GM12878 (cell line): ENCODE measurements at regions of chr1 and their contacts with region 1.

Region 1: GRCh38 chr1:117059678-117060440 is at the start of gene TTF2:
- DNase-seq: peak; percentile 99
- ATAC-seq: peak; percentile 86
- H3K4me3 ChIP-seq: peak within 1 kb of the TSS; percentile 84
- H3K27ac ChIP-seq: peak within 1 kb of the TSS; percentile 90
- H3K4me1 ChIP-seq: peaks cover 4% of the 10 kb centered on the region
- H3K27me3 ChIP-seq: no peaks in the 10 kb centered on the region
- CTCF ChIP-seq: peak in 1 of 3 experiments; percentile 26; a peak in 1 of 6 replicates
- EP300 ChIP-seq: peak in 1 of 2 experiments; percentile 40; a peak in 1 of 4 replicates
- POLR2A ChIP-seq: peak; percentile 85
- RAD21 ChIP-seq: no peak
- polyA plus RNA-seq, gene TTF2: 17.7 to 20.8 TPM

Region 2: GRCh38 chr1:116853670-116854402 is 206.0 kb before region 1 on chr1:
- CTCF ChIA-PET with region 1: interaction called, 15 read pairs
- POLR2A ChIA-PET with region 1: interaction called, 6 read pairs
- RAD21 ChIA-PET with region 1: interaction called, 9 read pairs
- SMC1A ChIA-PET with region 1: interaction called, 24 read pairs
- in situ Hi-C with region 1: no loop called
- intact Hi-C with region 1: no loop called
- DNase-seq: no peak
- ATAC-seq: peak; percentile 81
- H3K4me3 ChIP-seq: no peak overlapping the region
- H3K27ac ChIP-seq: no peak overlapping the region
- H3K4me1 ChIP-seq: 0 out of 2 replicates have a peak, but pooled peaks cover 3% of the 10 kb centered on the region
- H3K27me3 ChIP-seq: no peaks in the 10 kb centered on the region
- CTCF ChIP-seq: no peak
- EP300 ChIP-seq: no peak
- POLR2A ChIP-seq: no peak
- RAD21 ChIP-seq: no peak

Region 3: GRCh38 chr1:117001254-117001927 is 58.5 kb before region 1 on chr1 and contains the start of gene CD101:
- CTCF ChIA-PET with region 1: interaction called, 8 read pairs
- POLR2A ChIA-PET with region 1: interaction called, 7 read pairs
- RAD21 ChIA-PET with region 1: interaction called, 12 read pairs
- SMC1A ChIA-PET with region 1: interaction called, 6 read pairs
- in situ Hi-C with region 1: no loop called
- intact Hi-C with region 1: no loop called
- DNase-seq: peak; percentile 82
- ATAC-seq: peak; percentile 95
- H3K4me3 ChIP-seq: peak within 1 kb of the TSS; percentile 6; the same call in 1 of the 2 replicates
- H3K27ac ChIP-seq: peak within 1 kb of the TSS; percentile 49
- H3K4me1 ChIP-seq: peaks cover 20% of the 10 kb centered on the region
- H3K27me3 ChIP-seq: no peaks in the 10 kb centered on the region
- CTCF ChIP-seq: no peak
- EP300 ChIP-seq: peak; percentile 66 to 85
- POLR2A ChIP-seq: no peak
- RAD21 ChIP-seq: peak; percentile 36; the same call in 1 of the 2 replicates
- polyA plus RNA-seq, gene CD101: 1.9 to 2.7 TPM

Region 4: DNA sequence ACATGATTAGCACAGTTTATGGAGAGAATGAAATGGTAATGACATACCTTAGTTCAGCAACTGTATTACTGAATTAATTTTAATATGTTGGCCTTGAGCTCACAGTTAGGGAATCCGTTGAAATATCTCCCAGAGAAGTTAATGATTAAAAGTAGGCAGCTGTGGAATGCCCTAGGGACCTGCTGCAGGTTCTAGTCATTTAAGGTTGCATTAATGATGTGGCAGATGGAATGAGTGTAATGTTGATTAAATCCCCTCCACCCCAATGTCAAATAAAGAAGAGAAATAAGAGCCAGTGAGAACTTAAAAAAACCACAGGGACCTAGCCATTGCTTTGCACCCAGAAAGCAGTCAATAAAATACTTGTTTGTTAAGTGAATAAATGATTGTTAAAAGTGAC is 102.0 kb after region 1 on chr1:
- CTCF ChIA-PET with region 1: no interaction called
- POLR2A ChIA-PET with region 1: no interaction called
- RAD21 ChIA-PET with region 1: no interaction called
- SMC1A ChIA-PET with region 1: no interaction called
- in situ Hi-C with region 1: no loop called
- intact Hi-C with region 1: no loop called
- DNase-seq: no peak
- ATAC-seq: no peak
- H3K4me3 ChIP-seq: no peak overlapping the region
- H3K27ac ChIP-seq: no peak overlapping the region
- H3K4me1 ChIP-seq: no peaks in the 10 kb centered on the region
- H3K27me3 ChIP-seq: peaks cover 0 to 1% of the 10 kb centered on the region in 2 experiments; a peak in 1 of 4 replicates
- CTCF ChIP-seq: no peak
- EP300 ChIP-seq: no peak
- POLR2A ChIP-seq: no peak
- RAD21 ChIP-seq: no peak

Region 5: DNA sequence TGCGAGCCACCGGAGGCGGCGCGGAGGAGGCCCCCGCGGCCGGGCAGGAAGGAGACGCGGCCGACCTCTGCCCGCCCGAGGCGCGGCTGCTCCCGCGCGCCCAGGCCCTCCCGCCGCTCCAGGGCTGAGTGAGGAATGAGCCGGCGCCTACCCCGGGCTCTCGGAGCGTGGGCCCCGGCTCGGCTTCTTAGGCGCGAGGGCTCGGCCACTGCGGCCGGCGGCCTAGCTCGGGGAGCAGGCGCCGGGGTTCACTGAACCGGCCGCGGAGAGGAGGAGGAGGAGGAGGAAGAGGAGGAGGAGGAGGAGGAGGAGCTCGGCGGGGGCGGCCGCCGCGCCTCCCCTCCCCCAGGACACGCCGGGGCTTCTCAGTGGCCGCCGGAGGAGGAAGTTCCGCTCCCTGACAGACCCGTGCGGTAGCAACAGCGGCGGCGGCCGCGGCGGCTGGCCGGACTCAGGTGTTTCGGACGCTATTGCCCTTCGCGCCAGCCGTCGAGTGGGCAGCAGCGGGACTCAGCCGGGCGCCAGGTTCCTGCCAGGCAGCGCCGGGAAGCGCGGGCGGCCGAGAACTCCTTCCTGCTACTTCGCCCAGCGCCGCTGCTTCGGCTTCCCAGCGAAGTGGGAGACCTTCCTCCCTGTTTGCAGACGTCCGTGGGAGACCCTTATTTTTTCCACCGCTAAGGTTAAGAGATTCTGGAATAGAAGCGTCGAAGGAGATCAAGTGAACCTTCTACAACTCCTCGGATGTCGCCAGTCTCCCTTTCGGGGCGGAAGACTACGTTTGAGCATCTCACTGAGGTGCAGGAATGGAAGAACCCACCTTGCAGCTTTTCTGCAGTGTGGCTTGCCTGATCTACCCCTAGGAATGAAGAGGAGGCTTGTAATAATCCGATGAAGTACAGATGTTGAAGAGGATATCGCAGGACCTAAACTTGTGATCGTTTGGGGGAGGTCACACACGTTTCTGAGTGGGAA is 307.5 kb after region 1 on chr1 and contains the start of gene MAN1A2:
- CTCF ChIA-PET with region 1: interaction called, 3 read pairs
- POLR2A ChIA-PET with region 1: interaction called, 5 read pairs
- RAD21 ChIA-PET with region 1: no interaction called
- SMC1A ChIA-PET with region 1: interaction called, 3 read pairs
- in situ Hi-C with region 1: no loop called
- intact Hi-C with region 1: loop called (anchors 10 kb)
- DNase-seq: peak; percentile 53
- ATAC-seq: peak; percentile 77
- H3K4me3 ChIP-seq: peak within 1 kb of the TSS; percentile 96
- H3K27ac ChIP-seq: peak within 1 kb of the TSS; percentile 92
- H3K4me1 ChIP-seq: peaks cover 20% of the 10 kb centered on the region
- H3K27me3 ChIP-seq: no peaks in the 10 kb centered on the region
- CTCF ChIP-seq: no peak
- EP300 ChIP-seq: no peak
- POLR2A ChIP-seq: peak; percentile 79
- RAD21 ChIP-seq: no peak
- polyA plus RNA-seq, gene MAN1A2: 2.8 to 3.2 TPM